ENCODE measurements at regions of chr2 and their contacts with region 1.

Region 1: GRCh38 chr2:28403370-28403956 is 10.8 kb downstream of the FOSL2 start:
- DNase-seq: no peak
- H3K4me3 ChIP-seq: no peak overlapping the region
- CTCF ChIP-seq: no peak
- POLR2A ChIP-seq: no peak

Region 2: DNA sequence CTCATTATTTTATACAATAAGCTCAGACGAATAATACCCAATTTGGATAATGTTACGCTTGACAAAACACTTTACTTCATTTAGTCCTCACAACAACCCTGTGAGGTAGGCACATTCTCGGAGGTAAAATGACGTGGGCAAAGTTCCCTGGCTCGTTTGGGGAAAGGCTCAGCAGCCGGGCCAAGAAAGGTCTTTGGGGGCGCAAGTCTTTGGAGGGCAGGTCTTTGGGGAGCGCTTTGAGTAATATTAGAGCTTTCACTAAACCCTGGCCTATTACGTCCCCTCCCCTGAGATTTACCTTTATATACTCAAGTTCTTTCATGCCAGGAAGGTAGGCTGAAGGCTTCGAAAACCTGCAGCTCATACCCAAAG is 513.7 kb before region 1 on chr2:
- intact Hi-C with region 1: loop called (anchors 5 kb)
- DNase-seq: peak; percentile 29 to 84
- H3K4me3 ChIP-seq: peak overlapping the region; percentile 50
- CTCF ChIP-seq: no peak
- POLR2A ChIP-seq: no peak

Measured in lower leg skin (tissue), 4 donors.